ENCODE measurements at regions of chr12 and their contacts with region 1.

Region 1: GRCh38 chr12:46124848-46125619 is 134.7 kb upstream of the SCAF11 start:
- DNase-seq: peak; percentile 74
- ATAC-seq: peak; percentile 86
- H3K4me3 ChIP-seq: peak overlapping the region in 1 of 5 experiments; percentile 6
- H3K4me3 Mint-ChIP-seq: peak overlapping the region; percentile 62
- H3K27ac ChIP-seq: no peak overlapping the region
- H3K27ac Mint-ChIP-seq: peak overlapping the region; percentile 84
- H3K4me1 ChIP-seq: peaks cover 3 to 4% of the 10 kb centered on the region in 2 donors
- H3K4me1 Mint-ChIP-seq: peaks cover 5% of the 10 kb centered on the region
- H3K27me3 ChIP-seq: no peaks in the 10 kb centered on the region
- H3K27me3 Mint-ChIP-seq: peaks cover 10% of the 10 kb centered on the region
- CTCF ChIP-seq: peak; percentile 77

Region 2: GRCh38 chr12:46108721-46109120 is 16.3 kb before region 1 on chr12:
- CTCF ChIA-PET with region 1: interaction called, 67 read pairs
- POLR2A ChIA-PET with region 1: interaction called, 3 read pairs
- intact Hi-C with region 1: no loop called
- DNase-seq: peak; percentile 80
- ATAC-seq: peak; percentile 83
- H3K4me3 ChIP-seq: peak overlapping the region in 1 of 5 experiments; percentile 8
- H3K4me3 Mint-ChIP-seq: peak overlapping the region; percentile 49
- H3K27ac ChIP-seq: peak overlapping the region; percentile 53 to 75
- H3K27ac Mint-ChIP-seq: peak overlapping the region; percentile 85
- H3K4me1 ChIP-seq: peaks cover 45 to 48% of the 10 kb centered on the region in 2 donors
- H3K4me1 Mint-ChIP-seq: peaks cover 45% of the 10 kb centered on the region
- H3K27me3 ChIP-seq: no peaks in the 10 kb centered on the region
- H3K27me3 Mint-ChIP-seq: no peaks in the 10 kb centered on the region
- CTCF ChIP-seq: no peak

Region 3: DNA sequence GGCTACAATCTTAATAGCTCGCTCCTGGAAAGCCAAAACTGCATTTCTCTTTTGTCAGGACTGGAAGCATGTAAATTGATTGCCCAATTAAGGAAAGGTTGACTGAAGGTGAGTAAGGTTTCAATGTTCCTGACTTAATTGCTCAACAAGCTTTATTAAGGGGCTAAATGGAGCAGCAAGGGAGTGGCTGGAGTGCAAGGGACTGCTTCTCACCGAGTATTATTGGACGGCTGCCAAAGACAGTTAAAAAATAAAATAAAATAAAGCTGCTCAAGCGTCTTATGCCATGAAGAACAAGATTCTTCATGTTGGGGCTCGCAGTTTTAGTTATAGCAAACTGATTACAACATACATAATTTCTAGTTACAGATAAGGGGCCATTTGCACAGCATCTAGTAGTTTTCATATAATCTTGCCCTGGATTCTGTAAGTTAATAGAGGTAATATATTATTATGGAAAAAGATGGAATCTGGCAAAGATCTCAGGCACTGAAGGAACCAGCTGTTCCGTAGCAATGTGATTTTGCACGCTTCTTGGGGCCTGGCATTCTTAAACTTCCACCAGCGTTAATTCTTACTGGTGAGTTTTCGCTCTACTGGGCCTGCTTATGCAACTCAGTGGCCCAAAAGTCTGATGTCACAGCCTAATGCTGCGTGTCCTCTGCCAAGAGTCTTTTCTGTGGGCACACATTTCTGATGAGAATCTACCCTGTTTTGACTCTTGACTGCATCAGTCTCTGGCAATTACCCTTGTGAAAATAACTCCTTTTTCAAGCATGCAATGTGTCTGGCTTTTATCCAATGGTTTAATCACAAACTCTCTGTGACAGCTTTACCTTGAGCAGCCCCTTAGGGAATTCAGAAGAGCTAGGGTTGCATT is 35.3 kb after region 1 on chr12:
- CTCF ChIA-PET with region 1: interaction called, 10 read pairs
- POLR2A ChIA-PET with region 1: no interaction called
- intact Hi-C with region 1: no loop called
- DNase-seq: no peak
- ATAC-seq: no peak
- H3K4me3 ChIP-seq: no peak overlapping the region
- H3K4me3 Mint-ChIP-seq: peak overlapping the region; percentile 10
- H3K27ac ChIP-seq: no peak overlapping the region
- H3K27ac Mint-ChIP-seq: no peak overlapping the region
- H3K4me1 ChIP-seq: peaks cover 11 to 17% of the 10 kb centered on the region in 2 donors
- H3K4me1 Mint-ChIP-seq: peaks cover 32% of the 10 kb centered on the region
- H3K27me3 ChIP-seq: no peaks in the 10 kb centered on the region
- H3K27me3 Mint-ChIP-seq: no peaks in the 10 kb centered on the region
- CTCF ChIP-seq: no peak

Region 4: GRCh38 chr12:46303039-46303666 is 178.1 kb after region 1 on chr12:
- CTCF ChIA-PET with region 1: interaction called, 95 read pairs
- POLR2A ChIA-PET with region 1: no interaction called
- intact Hi-C with region 1: loop called (anchors 1 kb)
- DNase-seq: peak; percentile 73
- ATAC-seq: peak; percentile 71
- H3K4me3 ChIP-seq: no peak overlapping the region
- H3K4me3 Mint-ChIP-seq: no peak overlapping the region
- H3K27ac ChIP-seq: no peak overlapping the region
- H3K27ac Mint-ChIP-seq: peak overlapping the region; percentile 28
- H3K4me1 ChIP-seq: peaks cover 19 to 20% of the 10 kb centered on the region in 2 donors
- H3K4me1 Mint-ChIP-seq: peaks cover 29% of the 10 kb centered on the region
- H3K27me3 ChIP-seq: no peaks in the 10 kb centered on the region
- H3K27me3 Mint-ChIP-seq: no peaks in the 10 kb centered on the region
- CTCF ChIP-seq: peak; percentile 72

Region 5: DNA sequence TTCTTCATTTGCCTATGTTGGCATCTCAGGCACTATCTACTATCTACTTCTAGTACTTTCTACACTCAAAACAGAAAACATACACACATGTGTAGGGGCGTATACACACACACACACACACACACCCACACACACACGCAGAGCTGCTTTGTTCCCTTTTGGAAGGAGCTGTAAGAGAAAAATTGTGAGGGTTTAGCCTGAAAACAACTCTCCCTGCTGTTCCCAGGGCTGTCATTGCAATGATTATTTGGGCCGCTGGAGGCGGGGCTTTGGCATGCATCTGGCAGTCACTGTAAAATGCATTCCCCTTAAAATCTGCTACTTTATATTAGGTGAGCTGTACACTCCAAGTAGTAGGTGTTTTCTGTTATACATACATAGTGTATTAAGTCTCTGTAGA is 276.6 kb after region 1 on chr12:
- CTCF ChIA-PET with region 1: no interaction called
- POLR2A ChIA-PET with region 1: no interaction called
- intact Hi-C with region 1: no loop called
- DNase-seq: no peak
- ATAC-seq: no peak
- H3K4me3 ChIP-seq: no peak overlapping the region
- H3K4me3 Mint-ChIP-seq: no peak overlapping the region
- H3K27ac ChIP-seq: no peak overlapping the region
- H3K27ac Mint-ChIP-seq: no peak overlapping the region
- H3K4me1 ChIP-seq: peaks cover 20 to 26% of the 10 kb centered on the region in 2 donors
- H3K4me1 Mint-ChIP-seq: peaks cover 53% of the 10 kb centered on the region
- H3K27me3 ChIP-seq: no peaks in the 10 kb centered on the region
- H3K27me3 Mint-ChIP-seq: no peaks in the 10 kb centered on the region
- CTCF ChIP-seq: no peak

Region 6: GRCh38 chr12:46492471-46493351 is 367.7 kb after region 1 on chr12:
- CTCF ChIA-PET with region 1: no interaction called
- POLR2A ChIA-PET with region 1: no interaction called
- intact Hi-C with region 1: no loop called
- DNase-seq: no peak
- ATAC-seq: no peak
- H3K4me3 ChIP-seq: no peak overlapping the region
- H3K4me3 Mint-ChIP-seq: no peak overlapping the region
- H3K27ac ChIP-seq: no peak overlapping the region
- H3K27ac Mint-ChIP-seq: no peak overlapping the region
- H3K4me1 ChIP-seq: peaks cover 6 to 7% of the 10 kb centered on the region in 2 donors
- H3K4me1 Mint-ChIP-seq: peaks cover 5% of the 10 kb centered on the region
- H3K27me3 ChIP-seq: no peaks in the 10 kb centered on the region
- H3K27me3 Mint-ChIP-seq: no peaks in the 10 kb centered on the region
- CTCF ChIP-seq: no peak

Region 7: GRCh38 chr12:46675736-46676135 is 550.7 kb after region 1 on chr12:
- CTCF ChIA-PET with region 1: interaction called, 14 read pairs
- POLR2A ChIA-PET with region 1: no interaction called
- intact Hi-C with region 1: no loop called
- DNase-seq: peak; percentile 31
- ATAC-seq: no peak
- H3K4me3 ChIP-seq: no peak overlapping the region
- H3K4me3 Mint-ChIP-seq: no peak overlapping the region
- H3K27ac ChIP-seq: no peak overlapping the region
- H3K27ac Mint-ChIP-seq: no peak overlapping the region
- H3K4me1 ChIP-seq: no peaks in the 10 kb centered on the region
- H3K4me1 Mint-ChIP-seq: no peaks in the 10 kb centered on the region
- H3K27me3 ChIP-seq: no peaks in the 10 kb centered on the region
- H3K27me3 Mint-ChIP-seq: peaks cover 3% of the 10 kb centered on the region
- CTCF ChIP-seq: peak; percentile 75